Heart right ventricle (tissue), 16 donors: ENCODE measurements at regions of chr4 and their contacts with region 1.

Region 1: DNA sequence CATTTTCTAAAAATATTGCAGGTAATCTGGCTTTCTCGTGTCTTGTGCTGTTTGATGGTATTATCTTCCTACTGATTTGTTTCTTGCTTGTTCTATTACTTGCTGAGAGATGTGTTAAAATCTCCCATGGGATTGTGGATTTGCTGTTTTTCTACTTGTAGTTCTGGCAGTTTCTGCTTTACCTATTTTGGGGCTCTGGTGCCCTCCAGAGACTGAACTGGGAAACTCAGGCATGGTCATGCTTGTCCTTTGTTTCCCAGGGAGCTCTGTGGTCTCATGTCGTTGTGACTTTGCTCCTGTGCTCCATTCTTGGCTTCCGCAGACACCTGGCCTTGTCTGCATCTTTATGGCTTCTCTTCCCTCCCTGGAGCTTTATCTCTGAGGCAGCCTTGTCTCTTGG is 39.5 kb downstream of the NSD2 start:
- DNase-seq: no peak
- ATAC-seq: peak in 2 of 8 donors; percentile 49 to 53
- H3K4me3 ChIP-seq: no peak overlapping the region
- H3K27ac ChIP-seq: no peak overlapping the region
- H3K4me1 ChIP-seq: peaks cover 0 to 7% (median 0%) of the 10 kb centered on the region in 9 donors
- H3K27me3 ChIP-seq: no peaks in the 10 kb centered on the region
- CTCF ChIP-seq: peak in 8 of 9 donors; percentile 5 to 54 (median 46)

Region 2: GRCh38 chr4:808860-809570 is 1101.6 kb before region 1 on chr4:
- intact Hi-C with region 1: loop called in 1 of 10 experiments (anchors 5 kb)
- DNase-seq: no peak
- ATAC-seq: peak in 2 of 8 donors; percentile 12 to 38
- H3K4me3 ChIP-seq: no peak overlapping the region
- H3K27ac ChIP-seq: no peak overlapping the region
- H3K4me1 ChIP-seq: peaks cover 0 to 2% (median 0%) of the 10 kb centered on the region in 9 donors
- H3K27me3 ChIP-seq: peaks cover 0 to 41% (median 33%) of the 10 kb centered on the region in 7 donors
- CTCF ChIP-seq: no peak

Region 3: DNA sequence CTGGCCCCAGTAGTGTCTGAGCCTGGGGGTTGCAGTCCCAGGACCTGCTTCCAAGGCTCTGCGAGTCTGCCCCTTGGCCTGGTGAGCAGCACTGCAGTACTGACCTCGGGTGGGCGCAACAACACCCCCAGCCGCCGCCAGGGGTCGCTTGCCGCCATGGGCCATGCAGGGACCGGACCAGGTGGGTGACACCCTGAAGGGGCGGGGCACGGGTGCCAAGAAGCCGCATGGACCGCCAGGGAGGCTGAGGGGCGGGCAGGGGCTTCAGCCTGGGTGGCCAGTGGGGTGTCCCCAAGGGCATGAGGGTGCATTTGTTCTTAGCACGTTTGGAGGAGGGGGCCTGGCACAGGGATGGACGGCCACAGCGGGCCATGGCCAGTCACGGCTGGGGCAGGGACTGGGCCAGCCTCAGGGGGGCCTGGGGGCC is 164.4 kb before region 1 on chr4:
- intact Hi-C with region 1: no loop called
- DNase-seq: peak; percentile 63 to 77
- ATAC-seq: peak; percentile 60 to 83 (median 68)
- H3K4me3 ChIP-seq: no peak overlapping the region
- H3K27ac ChIP-seq: no peak overlapping the region
- H3K4me1 ChIP-seq: peaks cover 0 to 7% (median 4%) of the 10 kb centered on the region in 9 donors
- H3K27me3 ChIP-seq: peaks cover 0 to 11% (median 7%) of the 10 kb centered on the region in 7 donors
- CTCF ChIP-seq: peak; percentile 69 to 86 (median 79)

Region 4: DNA sequence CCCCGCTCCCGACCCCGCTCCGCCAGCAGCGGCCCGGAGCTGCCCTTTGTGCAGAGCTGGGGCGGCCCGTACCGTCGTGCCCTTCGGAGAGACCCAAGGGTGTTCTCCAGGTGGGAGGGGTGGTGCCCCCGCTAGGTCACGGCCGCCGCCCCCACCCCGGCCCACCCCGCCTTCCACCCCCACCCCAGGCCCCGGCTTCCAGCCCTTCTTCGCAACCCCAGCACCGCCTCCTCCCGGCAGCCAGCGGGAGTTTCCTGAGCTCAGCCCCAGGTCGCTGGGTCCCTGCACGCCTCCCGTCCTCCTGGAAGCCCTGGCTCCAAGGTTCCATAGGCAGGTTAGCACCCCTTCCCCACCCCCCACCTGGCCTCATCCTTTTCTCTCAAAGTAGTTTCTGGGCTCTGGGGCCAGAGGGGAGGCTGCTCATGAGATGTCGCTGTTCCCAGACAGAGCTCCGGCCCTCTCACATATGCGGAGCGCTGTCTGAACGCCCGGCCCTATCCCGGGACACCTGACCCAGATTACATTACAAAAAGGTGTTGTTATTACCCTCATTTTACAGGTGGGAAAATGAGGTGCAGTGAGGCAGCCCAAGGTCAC is 142.8 kb before region 1 on chr4:
- intact Hi-C with region 1: no loop called
- DNase-seq: no peak
- ATAC-seq: no peak
- H3K4me3 ChIP-seq: peak overlapping the region in 9 of 10 donors; percentile 22 to 58 (median 49)
- H3K27ac ChIP-seq: no peak overlapping the region
- H3K4me1 ChIP-seq: peaks cover 2 to 19% (median 11%) of the 10 kb centered on the region in 9 donors
- H3K27me3 ChIP-seq: peaks cover 0 to 72% (median 18%) of the 10 kb centered on the region in 7 donors
- CTCF ChIP-seq: peak in 5 of 9 donors; percentile 13 to 41 (median 19)